ENCODE measurements at regions of chr17 and their contacts with region 1.

Region 1: GRCh38 chr17:7687908-7688807 is at the start of gene WRAP53:
- DNase-seq: peak; percentile 92

Region 2: GRCh38 chr17:7583253-7584109 is 104.7 kb before region 1 on chr17 and contains the start of gene MPDU1:
- CTCF ChIA-PET with region 1: interaction called, 4 read pairs
- POLR2A ChIA-PET with region 1: interaction called, 49 read pairs
- DNase-seq: peak; percentile 90

Region 3: DNA sequence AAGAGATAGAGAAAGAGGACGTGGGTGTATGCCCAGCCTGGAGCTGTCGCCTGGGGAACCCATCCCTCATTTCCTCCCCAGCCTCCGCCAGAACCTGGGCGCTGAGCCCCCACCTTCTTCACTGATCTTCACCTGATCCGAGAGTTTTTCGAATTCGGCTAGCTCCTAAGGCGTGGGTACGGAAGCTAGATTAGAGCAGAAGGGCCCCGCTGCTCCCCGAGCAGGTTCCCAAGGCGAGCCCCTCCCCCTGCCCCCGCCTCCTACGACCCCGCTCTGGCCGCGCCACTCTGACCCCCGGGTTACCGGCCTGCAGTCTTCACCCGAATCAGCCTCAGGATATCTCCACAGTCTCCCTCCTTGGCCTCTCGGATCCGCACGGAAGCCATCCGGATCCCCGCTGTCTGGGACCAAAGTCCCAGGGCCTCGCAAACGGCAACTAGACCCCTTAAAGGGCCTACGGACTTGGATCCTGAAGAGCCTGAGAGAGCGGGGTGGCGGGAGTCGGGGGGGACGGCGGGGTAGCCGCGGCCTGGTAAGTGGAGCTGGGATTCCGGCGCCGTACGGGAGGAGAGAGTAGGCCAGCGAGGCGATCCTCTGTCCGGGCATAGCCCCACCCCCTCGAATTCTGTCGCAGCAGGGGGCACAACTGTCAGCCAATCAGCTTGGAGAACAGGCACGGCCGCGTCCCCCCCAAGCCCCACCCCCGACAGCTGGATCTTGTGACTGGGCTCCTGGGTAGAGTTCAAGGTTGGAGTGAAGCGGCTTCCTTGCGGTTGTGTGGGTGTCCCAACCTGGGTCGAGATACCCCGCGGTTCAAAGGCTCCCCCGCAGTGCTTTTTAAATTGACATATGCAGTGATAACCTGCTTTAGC is 60.7 kb before region 1 on chr17 and contains the start of gene SAT2:
- CTCF ChIA-PET with region 1: interaction called, 81 read pairs
- POLR2A ChIA-PET with region 1: interaction called, 236 read pairs
- DNase-seq: peak; percentile 96

Region 4: GRCh38 chr17:7650509-7651096 is 37.6 kb before region 1 on chr17 and contains the start of gene ATP1B2:
- CTCF ChIA-PET with region 1: interaction called, 6 read pairs
- POLR2A ChIA-PET with region 1: interaction called, 143 read pairs
- DNase-seq: peak; percentile 87

Region 5: GRCh38 chr17:7703584-7704479 is 15.7 kb after region 1 on chr17:
- CTCF ChIA-PET with region 1: interaction called, 15 read pairs
- POLR2A ChIA-PET with region 1: interaction called, 100 read pairs
- DNase-seq: peak; percentile 58

Region 6: DNA sequence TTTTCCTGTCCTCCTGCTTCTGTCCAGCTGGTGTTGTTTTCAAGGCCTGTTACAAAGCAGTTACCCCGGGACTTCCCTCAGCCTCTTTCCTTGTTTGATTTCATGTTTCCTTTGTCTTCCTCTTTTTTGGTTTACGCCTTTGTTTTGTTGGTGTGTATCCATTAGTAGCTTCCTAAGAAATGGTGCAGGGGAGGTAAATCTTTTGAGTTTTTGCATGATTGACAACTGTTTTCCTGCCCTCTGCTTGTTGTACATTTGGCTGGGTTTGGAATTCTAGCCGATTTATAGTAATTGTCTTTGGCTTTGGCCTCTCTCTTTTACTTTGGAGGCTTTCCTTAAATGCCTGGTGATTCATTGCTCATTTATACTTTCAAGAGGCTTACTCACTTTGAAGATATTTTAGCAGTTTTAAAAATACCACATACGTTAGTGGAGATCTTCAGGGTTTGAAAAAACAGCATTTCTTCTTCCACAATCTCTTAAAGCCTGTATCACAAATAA is 62.2 kb after region 1 on chr17:
- CTCF ChIA-PET with region 1: no interaction called
- POLR2A ChIA-PET with region 1: no interaction called
- DNase-seq: no peak